Activated CD4-positive, alpha-beta T cell treated with anti-CD3 and anti-CD28 coated beads for 36 hours (primary cell): ENCODE measurements at regions of chr11 and their contacts with region 1.

Region 1: DNA sequence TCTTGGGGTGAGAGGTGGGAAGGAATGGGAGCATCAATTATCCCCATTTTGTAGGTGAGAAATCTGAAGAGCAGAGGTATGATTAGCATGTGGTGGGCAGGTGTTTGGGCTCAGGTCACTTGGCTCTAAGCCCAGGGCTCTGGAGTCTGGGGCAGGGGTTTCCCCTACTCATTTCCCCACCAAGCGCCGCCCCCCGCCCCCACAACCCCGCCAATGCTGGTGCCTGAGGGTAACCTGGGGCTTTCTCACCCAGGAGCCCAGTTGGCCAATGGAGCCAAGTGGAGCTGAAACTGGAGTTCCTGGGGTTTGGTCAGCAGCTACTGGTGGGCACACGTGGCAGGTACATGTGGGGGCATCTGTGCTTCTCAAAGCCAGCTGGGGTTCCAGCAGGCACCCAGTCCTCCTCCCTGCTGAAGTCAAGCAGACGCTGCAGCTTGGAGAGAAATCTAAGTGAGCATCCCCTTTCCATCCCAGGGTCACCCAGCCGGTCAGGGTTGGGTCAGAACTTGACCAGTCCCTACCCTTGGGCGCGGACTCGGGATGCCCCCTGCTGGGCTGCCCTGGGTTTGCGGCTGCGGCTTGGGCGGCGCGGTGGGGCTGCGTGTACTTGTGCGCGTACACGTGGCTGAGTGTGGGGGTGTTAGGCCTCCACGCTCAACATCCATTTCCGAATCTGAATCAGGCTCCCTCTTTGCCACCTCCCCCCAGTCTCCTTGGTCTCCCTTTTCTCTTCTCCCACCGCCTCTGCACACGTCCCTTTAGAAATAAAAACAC is 1.7 kb upstream of the CHRM1 start:
- DNase-seq: peak; percentile 83
- ATAC-seq: peak; percentile 68
- H3K4me3 Mint-ChIP-seq: peak overlapping the region; percentile 59
- H3K27ac Mint-ChIP-seq: peak overlapping the region; percentile 7
- H3K4me1 Mint-ChIP-seq: peaks cover 32% of the 10 kb centered on the region
- H3K27me3 Mint-ChIP-seq: peaks cover 57% of the 10 kb centered on the region

Region 2: GRCh38 chr11:62694455-62695167 is 228.2 kb before region 1 on chr11:
- CTCF ChIA-PET with region 1: no interaction called
- POLR2A ChIA-PET with region 1: no interaction called
- intact Hi-C with region 1: no loop called
- DNase-seq: peak; percentile 86
- ATAC-seq: peak; percentile 95
- H3K4me3 Mint-ChIP-seq: no peak overlapping the region
- H3K27ac Mint-ChIP-seq: no peak overlapping the region
- H3K4me1 Mint-ChIP-seq: peaks cover 5% of the 10 kb centered on the region
- H3K27me3 Mint-ChIP-seq: no peaks in the 10 kb centered on the region

Region 3: GRCh38 chr11:62974848-62975522 is 52.1 kb after region 1 on chr11:
- CTCF ChIA-PET with region 1: interaction called, 3 read pairs
- POLR2A ChIA-PET with region 1: no interaction called
- intact Hi-C with region 1: loop called in 1 of 2 experiments (anchors 5 kb)
- DNase-seq: peak; percentile 59
- ATAC-seq: peak; percentile 73
- H3K4me3 Mint-ChIP-seq: no peak overlapping the region
- H3K27ac Mint-ChIP-seq: no peak overlapping the region
- H3K4me1 Mint-ChIP-seq: no peaks in the 10 kb centered on the region
- H3K27me3 Mint-ChIP-seq: peaks cover 5% of the 10 kb centered on the region